ENCODE measurements at regions of chr1 and their contacts with region 1.

Region 1: GRCh38 chr1:30911046-30911954 is 2.7 kb upstream of the SDC3 start:
- DNase-seq: peak; percentile 91
- H3K4me3 ChIP-seq: no peak overlapping the region
- H3K27ac ChIP-seq: no peak overlapping the region
- H3K4me1 ChIP-seq: peaks cover 11% of the 10 kb centered on the region
- H3K27me3 ChIP-seq: no peaks in the 10 kb centered on the region
- CTCF ChIP-seq: peak; percentile 70

Region 2: DNA sequence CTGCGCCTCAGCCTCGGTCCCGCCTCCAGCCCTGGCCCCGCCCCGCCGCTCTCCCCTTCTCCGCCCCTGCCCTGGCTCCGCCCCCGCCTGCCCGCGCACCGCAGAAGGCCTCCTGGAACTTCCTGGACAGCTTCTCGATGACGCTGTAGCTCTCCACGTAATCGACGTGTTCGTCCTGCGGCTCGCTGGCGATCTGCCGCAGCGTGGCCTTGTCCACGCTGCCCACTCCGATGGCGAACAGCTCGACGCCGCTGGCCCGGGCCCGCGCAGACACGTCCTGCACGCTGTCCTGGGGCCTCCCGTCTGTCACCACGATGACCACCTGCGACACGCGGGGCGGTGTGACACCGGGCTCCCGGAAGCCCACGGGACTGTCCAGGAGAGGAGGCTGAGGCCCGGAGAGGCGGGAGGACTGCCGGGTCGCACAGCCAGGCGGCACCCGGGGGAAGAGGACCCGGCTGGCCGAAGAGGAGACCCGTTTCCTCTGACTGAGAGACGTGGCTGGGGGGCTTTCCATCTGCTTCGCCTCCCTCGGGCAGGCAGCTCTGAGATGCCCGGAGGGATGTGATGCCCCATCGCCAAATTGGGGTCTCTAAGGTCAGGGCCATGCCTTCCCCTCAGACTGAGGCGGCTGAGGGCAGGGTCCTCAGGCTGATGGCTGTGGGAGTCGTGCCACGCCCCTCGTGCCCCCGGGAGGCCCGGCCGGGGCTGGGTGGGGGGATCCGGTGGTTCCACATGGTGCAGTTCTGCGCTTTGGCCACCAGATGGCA is 192.5 kb before region 1 on chr1:
- intact Hi-C with region 1: loop called (anchors 5 kb)
- DNase-seq: peak; percentile 88
- H3K4me3 ChIP-seq: peak overlapping the region; percentile 47
- H3K27ac ChIP-seq: peak overlapping the region; percentile 95
- H3K4me1 ChIP-seq: peaks cover 5% of the 10 kb centered on the region
- H3K27me3 ChIP-seq: no peaks in the 10 kb centered on the region
- CTCF ChIP-seq: peak; percentile 94

Region 3: DNA sequence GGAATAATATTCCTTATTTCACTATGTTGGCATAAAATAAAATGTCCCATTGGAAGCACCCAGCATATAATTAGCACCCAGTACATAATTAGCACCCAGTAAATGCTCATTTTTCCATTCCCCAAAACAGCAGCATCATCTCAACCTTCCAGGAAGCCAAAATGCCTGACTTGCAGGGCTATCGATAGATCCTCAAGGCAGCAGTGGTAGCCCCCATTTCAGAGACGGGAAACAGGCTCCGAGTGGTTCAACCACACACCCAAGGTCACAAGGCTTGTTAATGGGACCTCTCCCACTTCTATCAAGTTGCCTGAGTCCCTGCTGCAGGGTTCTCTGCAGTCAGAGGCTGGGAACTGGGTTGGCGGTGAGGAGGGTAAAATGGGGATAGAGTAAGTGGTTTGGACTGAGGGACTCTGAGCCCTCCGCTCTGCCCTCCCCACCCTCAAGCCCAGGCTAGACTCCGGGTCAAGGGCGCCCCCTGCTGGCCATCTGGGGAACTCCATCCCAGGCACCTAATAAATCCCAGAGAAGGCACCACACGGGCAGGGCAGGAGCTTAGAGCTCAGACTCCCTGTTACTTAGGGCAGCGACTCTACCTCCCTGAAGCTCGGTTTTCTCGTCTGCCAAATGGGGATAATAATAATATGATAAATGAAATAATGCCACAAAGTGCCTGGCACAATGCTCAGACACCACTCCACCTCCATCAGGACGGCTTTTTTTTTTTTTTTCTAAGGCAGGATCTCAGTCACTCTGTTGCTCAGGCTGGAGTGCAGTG is 131.8 kb before region 1 on chr1:
- intact Hi-C with region 1: loop called (anchors 5 kb)
- DNase-seq: peak; percentile 90
- H3K4me3 ChIP-seq: no peak overlapping the region
- H3K27ac ChIP-seq: no peak overlapping the region
- H3K4me1 ChIP-seq: no peaks in the 10 kb centered on the region
- H3K27me3 ChIP-seq: no peaks in the 10 kb centered on the region
- CTCF ChIP-seq: peak; percentile 98

Region 4: DNA sequence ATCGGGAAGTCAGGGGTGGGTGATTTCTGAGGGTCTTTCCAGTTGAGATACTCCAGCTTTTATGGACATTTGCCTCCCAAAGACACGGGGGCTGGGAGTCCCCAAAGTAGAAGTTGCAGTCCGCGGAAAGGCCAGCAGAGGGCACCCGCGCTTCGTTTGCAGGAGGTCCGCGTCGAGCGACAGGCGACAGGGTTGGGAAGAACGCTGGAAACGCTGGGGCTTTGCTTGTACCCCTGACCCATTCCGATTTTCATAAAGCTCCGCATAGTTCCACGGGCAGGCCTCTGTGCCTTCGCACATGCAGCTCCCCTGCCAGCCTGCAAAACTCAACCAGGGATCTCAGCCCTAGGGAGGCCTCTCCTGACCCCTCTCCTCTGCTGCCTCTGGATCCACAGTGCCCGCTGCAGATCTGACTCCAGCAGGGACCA is 109.5 kb before region 1 on chr1:
- intact Hi-C with region 1: loop called (anchors 1 kb)
- DNase-seq: peak; percentile 88
- H3K4me3 ChIP-seq: no peak overlapping the region
- H3K27ac ChIP-seq: no peak overlapping the region
- H3K4me1 ChIP-seq: no peaks in the 10 kb centered on the region
- H3K27me3 ChIP-seq: peaks cover 4% of the 10 kb centered on the region
- CTCF ChIP-seq: peak; percentile 97

Region 5: GRCh38 chr1:30966690-30967369 is 55.5 kb after region 1 on chr1:
- intact Hi-C with region 1: no loop called
- DNase-seq: no peak
- H3K4me3 ChIP-seq: no peak overlapping the region
- H3K27ac ChIP-seq: no peak overlapping the region
- H3K4me1 ChIP-seq: no peaks in the 10 kb centered on the region
- H3K27me3 ChIP-seq: no peaks in the 10 kb centered on the region
- CTCF ChIP-seq: no peak

Region 6: DNA sequence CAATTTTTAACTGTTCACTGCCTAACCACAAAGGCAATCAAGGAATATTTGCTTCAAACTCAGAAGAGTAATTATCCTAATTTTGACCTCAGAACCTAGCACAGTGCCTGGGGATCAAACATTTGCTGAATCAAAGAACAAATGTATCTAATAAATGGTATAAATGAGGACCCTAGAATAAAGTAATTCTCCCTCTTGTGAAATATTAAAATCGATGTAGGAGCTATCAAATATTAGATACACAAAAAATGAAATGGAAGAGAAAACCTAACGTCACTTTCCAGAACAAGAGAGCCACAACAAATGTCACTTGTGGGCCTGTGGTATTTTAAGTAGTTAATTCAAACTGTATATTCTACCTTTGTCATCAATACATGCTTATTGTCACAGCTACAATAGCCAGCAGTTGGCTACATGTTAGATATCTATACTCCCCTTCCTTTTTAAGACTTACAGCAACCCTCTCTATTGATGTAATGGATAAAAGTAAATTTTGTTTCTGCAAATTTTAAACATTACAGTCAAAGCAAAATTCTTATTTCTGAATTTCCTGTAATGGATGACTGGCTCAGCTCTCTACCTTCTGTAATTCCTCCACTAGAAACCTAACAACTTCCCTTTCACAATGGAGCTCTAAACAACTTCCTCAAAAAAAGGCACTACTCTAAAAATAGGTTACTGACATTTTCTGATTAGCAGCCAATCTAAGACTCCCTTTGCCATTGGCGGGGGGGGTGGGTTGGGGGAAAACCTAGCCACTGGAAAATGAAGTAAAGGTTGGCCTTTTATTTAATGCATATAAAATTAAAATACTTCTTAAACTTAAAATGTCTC is 116.6 kb after region 1 on chr1:
- intact Hi-C with region 1: no loop called
- DNase-seq: no peak
- H3K4me3 ChIP-seq: no peak overlapping the region
- H3K27ac ChIP-seq: peak overlapping the region; percentile 4
- H3K4me1 ChIP-seq: peaks cover 14% of the 10 kb centered on the region
- H3K27me3 ChIP-seq: no peaks in the 10 kb centered on the region
- CTCF ChIP-seq: no peak